Naive thymus-derived CD4-positive, alpha-beta T cell (primary cell): ENCODE measurements at regions of chr10 and their contacts with region 1.

Region 1: DNA sequence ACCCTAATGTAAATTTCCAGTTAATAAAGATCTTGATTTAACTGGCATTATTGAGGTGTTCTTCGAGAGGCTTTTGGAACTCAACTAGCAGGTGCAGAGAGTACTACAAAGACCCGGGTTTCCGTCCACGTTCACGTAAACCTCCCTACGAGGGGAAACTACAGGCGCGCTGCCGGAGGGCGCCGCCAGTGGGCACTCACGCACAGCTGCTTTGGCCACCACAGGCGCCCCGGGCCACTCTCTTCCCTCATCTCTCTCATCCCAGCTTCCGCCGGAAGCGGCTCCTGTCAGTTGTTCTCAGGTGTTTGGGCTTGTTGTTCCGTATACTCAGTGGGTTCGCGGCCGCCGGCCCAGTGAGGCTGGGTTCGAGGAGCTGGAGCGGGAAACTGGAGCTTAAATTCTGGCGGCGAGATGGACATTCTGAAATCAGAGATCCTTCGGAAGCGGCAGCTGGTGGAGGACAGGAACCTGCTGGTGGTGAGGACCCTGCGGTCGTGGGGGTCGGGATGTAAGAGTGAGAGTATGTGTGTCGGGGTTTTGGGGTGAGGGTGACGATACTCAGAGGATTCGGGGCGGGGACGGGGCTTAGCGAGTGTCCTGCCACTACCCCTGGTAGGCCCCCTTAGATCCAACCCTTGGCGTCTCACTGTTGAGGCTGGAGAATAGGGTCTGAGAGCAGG is at the start of gene PRPF18:
- DNase-seq: peak; percentile 87 to 96 (median 93)
- ATAC-seq: peak; percentile 100
- H3K4me3 ChIP-seq: peak within 1 kb of the TSS; percentile 96
- H3K4me3 Mint-ChIP-seq: peak within 1 kb of the TSS; percentile 95 to 100 (median 100)
- H3K27ac ChIP-seq: peak within 1 kb of the TSS; percentile 74
- H3K27ac Mint-ChIP-seq: peak within 1 kb of the TSS; percentile 91 to 100 (median 98)
- H3K4me1 ChIP-seq: peaks cover 8 to 13% of the 10 kb centered on the region in 2 donors
- H3K4me1 Mint-ChIP-seq: peaks cover 15 to 49% (median 40%) of the 10 kb centered on the region in 7 donors
- H3K27me3 ChIP-seq: no peaks in the 10 kb centered on the region
- H3K27me3 Mint-ChIP-seq: peaks cover 9 to 27% (median 16%) of the 10 kb centered on the region in 5 donors
- total RNA-seq, gene PRPF18: 20.2 to 30.0 (median 27.0) TPM

Region 2: DNA sequence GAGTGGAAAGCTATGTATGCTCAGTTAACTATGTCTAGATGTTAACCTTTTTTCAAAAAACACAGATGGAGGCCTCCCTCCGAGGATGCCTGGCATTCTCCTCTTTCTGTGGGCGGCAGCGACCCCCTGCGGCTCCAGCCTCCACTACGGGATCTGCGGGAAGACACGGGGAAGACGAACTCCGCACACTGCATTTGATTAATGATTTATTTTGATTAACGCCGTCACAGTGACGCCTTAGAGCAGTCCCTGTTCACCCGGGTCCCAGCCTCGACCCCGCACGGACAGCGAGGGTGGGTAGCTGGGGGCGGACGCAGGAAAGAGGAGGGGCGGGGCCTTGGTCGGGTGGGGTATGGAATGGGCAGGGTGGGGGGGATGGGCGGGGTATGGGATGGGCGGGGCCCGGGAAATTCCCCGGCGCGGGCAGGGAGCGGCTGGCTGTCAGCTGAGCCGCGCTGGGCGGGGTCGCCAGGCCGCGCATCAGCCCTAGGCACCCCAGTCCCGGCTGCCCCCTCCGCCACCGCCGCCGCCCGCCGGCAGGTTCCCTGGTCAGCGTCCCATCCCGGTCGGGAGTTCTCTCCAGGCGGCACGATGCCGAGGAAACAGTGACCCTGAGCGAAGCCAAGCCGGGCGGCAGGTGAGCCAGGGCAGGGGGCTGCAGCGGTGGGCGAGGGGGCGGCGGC is 487.0 kb before region 1 on chr10 and contains the start of gene OPTN:
- CTCF ChIA-PET with region 1: no interaction called
- POLR2A ChIA-PET with region 1: no interaction called
- intact Hi-C with region 1: loop called in 1 of 2 experiments (anchors 10 kb)
- DNase-seq: peak; percentile 61 to 85 (median 80)
- ATAC-seq: peak; percentile 90
- H3K4me3 ChIP-seq: peak within 1 kb of the TSS; percentile 82
- H3K4me3 Mint-ChIP-seq: peak within 1 kb of the TSS; percentile 83 to 97 (median 96)
- H3K27ac ChIP-seq: peak within 1 kb of the TSS; percentile 92
- H3K27ac Mint-ChIP-seq: peak within 1 kb of the TSS; percentile 88 to 98 (median 94)
- H3K4me1 ChIP-seq: peaks cover 6 to 21% of the 10 kb centered on the region in 2 donors
- H3K4me1 Mint-ChIP-seq: peaks cover 28 to 52% (median 49%) of the 10 kb centered on the region in 7 donors
- H3K27me3 ChIP-seq: no peaks in the 10 kb centered on the region
- H3K27me3 Mint-ChIP-seq: no peaks in the 10 kb centered on the region
- total RNA-seq, gene OPTN: 59.3 to 146 (median 60.0) TPM

Region 3: GRCh38 chr10:13348216-13349017 is 238.4 kb before region 1 on chr10 and contains the start of gene SEPHS1:
- CTCF ChIA-PET with region 1: no interaction called
- POLR2A ChIA-PET with region 1: interaction called, 5 read pairs
- intact Hi-C with region 1: loop called (anchors 1 kb)
- DNase-seq: peak; percentile 62 to 87 (median 84)
- ATAC-seq: peak; percentile 83
- H3K4me3 ChIP-seq: peak within 1 kb of the TSS; percentile 95
- H3K4me3 Mint-ChIP-seq: peak within 1 kb of the TSS; percentile 92 to 99 (median 96)
- H3K27ac ChIP-seq: peak within 1 kb of the TSS; percentile 84
- H3K27ac Mint-ChIP-seq: peak within 1 kb of the TSS; percentile 90 to 98 (median 97)
- H3K4me1 ChIP-seq: peaks cover 18 to 36% of the 10 kb centered on the region in 2 donors
- H3K4me1 Mint-ChIP-seq: peaks cover 28 to 69% (median 62%) of the 10 kb centered on the region in 7 donors
- H3K27me3 ChIP-seq: no peaks in the 10 kb centered on the region
- H3K27me3 Mint-ChIP-seq: peaks cover 0 to 9% (median 0%) of the 10 kb centered on the region in 5 donors
- total RNA-seq, gene SEPHS1: 23.7 to 57.3 (median 36.5) TPM

Region 4: DNA sequence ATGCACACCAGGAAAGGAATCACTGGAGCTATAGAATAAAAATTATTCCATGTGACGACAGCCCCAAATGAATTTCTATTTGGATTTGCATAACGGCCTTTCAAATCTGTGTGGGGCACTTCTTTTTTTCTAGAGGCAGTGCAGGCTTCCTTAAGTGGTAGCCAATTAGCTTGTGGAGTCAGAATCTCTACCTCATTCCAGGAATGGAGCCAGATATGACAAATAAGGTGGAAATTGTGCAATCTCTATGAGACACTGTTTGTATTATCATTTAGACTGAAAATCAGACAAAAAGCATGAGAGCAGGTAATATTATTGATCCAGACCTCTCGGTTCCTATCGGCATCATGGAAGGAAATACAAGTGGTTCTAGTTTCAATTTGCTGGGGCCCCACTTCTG is 136.7 kb before region 1 on chr10:
- CTCF ChIA-PET with region 1: no interaction called
- POLR2A ChIA-PET with region 1: no interaction called
- intact Hi-C with region 1: no loop called
- DNase-seq: no peak
- ATAC-seq: no peak
- H3K4me3 ChIP-seq: no peak overlapping the region
- H3K4me3 Mint-ChIP-seq: no peak overlapping the region
- H3K27ac ChIP-seq: no peak overlapping the region
- H3K27ac Mint-ChIP-seq: no peak overlapping the region
- H3K4me1 ChIP-seq: peaks cover 0 to 3% of the 10 kb centered on the region in 2 donors
- H3K4me1 Mint-ChIP-seq: peaks cover 0 to 7% (median 7%) of the 10 kb centered on the region in 7 donors
- H3K27me3 ChIP-seq: no peaks in the 10 kb centered on the region
- H3K27me3 Mint-ChIP-seq: peaks cover 0 to 26% (median 13%) of the 10 kb centered on the region in 5 donors

Region 5: GRCh38 chr10:13470270-13470669 is 116.5 kb before region 1 on chr10:
- CTCF ChIA-PET with region 1: no interaction called
- POLR2A ChIA-PET with region 1: no interaction called
- intact Hi-C with region 1: no loop called
- DNase-seq: no peak
- ATAC-seq: no peak
- H3K4me3 ChIP-seq: no peak overlapping the region
- H3K4me3 Mint-ChIP-seq: no peak overlapping the region
- H3K27ac ChIP-seq: no peak overlapping the region
- H3K27ac Mint-ChIP-seq: no peak overlapping the region
- H3K4me1 ChIP-seq: no peaks in the 10 kb centered on the region
- H3K4me1 Mint-ChIP-seq: no peaks in the 10 kb centered on the region
- H3K27me3 ChIP-seq: no peaks in the 10 kb centered on the region
- H3K27me3 Mint-ChIP-seq: no peaks in the 10 kb centered on the region

Region 6: DNA sequence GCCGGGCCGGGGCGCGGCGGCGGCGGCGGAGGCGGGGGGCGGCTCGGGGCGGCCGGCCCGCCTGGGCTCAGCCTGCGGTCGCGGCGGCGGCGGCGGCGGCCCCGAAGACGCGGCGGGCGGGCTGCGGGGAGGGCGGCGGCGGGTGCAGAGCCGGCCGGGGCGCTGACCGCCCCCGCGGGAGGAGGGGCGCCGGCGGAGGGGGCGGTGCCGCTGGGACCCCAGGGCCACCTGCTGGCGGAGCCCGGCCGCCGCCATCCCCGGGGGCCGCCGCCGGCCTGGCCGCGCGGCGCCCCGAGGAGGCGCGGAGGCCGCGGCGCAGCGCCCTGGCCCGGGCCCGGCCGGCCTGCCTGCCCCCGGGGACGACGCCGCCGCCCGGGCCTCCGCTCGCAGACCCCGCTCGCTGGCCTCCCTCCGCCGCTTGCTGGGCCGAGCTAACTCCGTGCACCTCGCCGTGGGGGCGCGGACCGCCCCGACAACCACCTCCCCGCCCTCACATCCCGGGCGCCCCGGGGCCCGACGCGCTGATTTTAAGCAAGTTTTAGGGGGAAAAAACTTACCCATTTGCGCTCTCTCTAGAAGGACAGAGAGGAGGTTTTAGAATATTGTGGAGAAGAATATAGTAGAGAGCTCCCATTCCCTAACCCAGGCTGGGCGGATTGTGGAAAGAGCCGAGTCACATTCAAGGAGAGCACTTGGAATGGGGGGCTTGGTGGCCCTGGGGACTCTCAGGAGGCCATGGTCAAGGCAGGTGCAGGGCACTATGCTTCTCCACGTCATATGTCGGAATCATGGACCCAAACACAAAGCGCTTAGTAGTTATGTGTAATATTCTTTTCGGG is 57.7 kb before region 1 on chr10 and contains the start of gene BEND7:
- CTCF ChIA-PET with region 1: no interaction called
- POLR2A ChIA-PET with region 1: no interaction called
- intact Hi-C with region 1: loop called in 1 of 2 experiments (anchors 2 kb)
- DNase-seq: peak in 1 of 9 donors; percentile 38
- ATAC-seq: peak; percentile 31
- H3K4me3 ChIP-seq: no peak within 1 kb of the TSS
- H3K4me3 Mint-ChIP-seq: peak within 1 kb of the TSS; percentile 57 to 85 (median 76)
- H3K27ac ChIP-seq: no peak within 1 kb of the TSS
- H3K27ac Mint-ChIP-seq: no peak within 1 kb of the TSS
- H3K4me1 ChIP-seq: peaks cover 4% of the 10 kb centered on the region in 2 donors
- H3K4me1 Mint-ChIP-seq: peaks cover 4 to 16% (median 13%) of the 10 kb centered on the region in 7 donors
- H3K27me3 ChIP-seq: peaks cover 6 to 17% of the 10 kb centered on the region in 2 donors
- H3K27me3 Mint-ChIP-seq: peaks cover 57 to 75% (median 69%) of the 10 kb centered on the region in 5 donors
- total RNA-seq, gene BEND7: 0.17 TPM in 1 of 5 experiments, not detected in the others

Region 7: DNA sequence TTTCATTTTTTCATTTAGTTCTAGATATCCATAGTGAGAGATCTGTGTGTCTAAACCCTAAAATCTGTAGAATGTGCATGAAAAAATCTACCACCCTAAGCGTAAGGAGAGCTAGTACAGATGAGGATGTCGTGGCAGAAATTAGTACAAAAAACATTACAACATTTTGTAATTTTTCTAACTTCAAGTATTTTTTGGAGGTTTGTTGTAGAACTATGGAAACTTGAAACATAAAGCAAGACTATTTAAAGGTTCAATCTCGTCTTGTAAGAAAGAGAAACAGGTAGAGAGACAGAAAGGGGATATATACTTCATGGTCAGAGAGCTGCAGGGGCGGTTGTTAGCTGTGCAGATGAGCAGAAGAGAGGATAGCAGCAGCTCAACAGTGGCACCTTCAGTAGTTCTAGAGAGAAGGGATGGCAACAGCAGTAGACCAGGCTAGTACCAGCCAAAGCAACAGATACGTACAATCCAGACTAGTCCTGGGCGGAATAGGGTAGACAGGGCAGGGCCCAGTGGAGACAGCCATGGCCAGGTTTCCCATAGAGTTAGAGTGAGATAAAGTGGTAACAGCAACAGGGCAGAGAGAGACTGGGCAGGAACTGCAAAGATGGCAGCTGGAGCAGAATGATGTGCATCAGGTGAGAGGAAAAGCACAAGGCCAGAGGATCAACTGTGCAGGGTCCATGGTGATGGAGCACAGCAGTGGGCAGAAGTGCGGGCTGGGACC is 598.7 kb after region 1 on chr10:
- CTCF ChIA-PET with region 1: no interaction called
- POLR2A ChIA-PET with region 1: no interaction called
- intact Hi-C with region 1: loop called in 1 of 2 experiments (anchors 2 kb)
- DNase-seq: peak in 4 of 9 donors; percentile 30 to 75 (median 74)
- ATAC-seq: peak; percentile 87
- H3K4me3 ChIP-seq: peak overlapping the region; percentile 37
- H3K4me3 Mint-ChIP-seq: peak overlapping the region; percentile 18 to 88 (median 77)
- H3K27ac ChIP-seq: peak overlapping the region; percentile 61
- H3K27ac Mint-ChIP-seq: peak overlapping the region; percentile 88 to 98 (median 95)
- H3K4me1 ChIP-seq: peaks cover 0 to 12% of the 10 kb centered on the region in 2 donors
- H3K4me1 Mint-ChIP-seq: peaks cover 12 to 35% (median 22%) of the 10 kb centered on the region in 7 donors
- H3K27me3 ChIP-seq: peaks cover 0 to 5% of the 10 kb centered on the region in 2 donors
- H3K27me3 Mint-ChIP-seq: peaks cover 17 to 69% (median 21%) of the 10 kb centered on the region in 5 donors